Activated CD4-positive, alpha-beta T cell treated with anti-CD3 and anti-CD28 coated beads, Interleukin-2, amount 10 ng/mL, durations not matched to agents 24 days and 14 days (primary cell): ENCODE measurements at regions of chr4 and their contacts with region 1.

Region 1: DNA sequence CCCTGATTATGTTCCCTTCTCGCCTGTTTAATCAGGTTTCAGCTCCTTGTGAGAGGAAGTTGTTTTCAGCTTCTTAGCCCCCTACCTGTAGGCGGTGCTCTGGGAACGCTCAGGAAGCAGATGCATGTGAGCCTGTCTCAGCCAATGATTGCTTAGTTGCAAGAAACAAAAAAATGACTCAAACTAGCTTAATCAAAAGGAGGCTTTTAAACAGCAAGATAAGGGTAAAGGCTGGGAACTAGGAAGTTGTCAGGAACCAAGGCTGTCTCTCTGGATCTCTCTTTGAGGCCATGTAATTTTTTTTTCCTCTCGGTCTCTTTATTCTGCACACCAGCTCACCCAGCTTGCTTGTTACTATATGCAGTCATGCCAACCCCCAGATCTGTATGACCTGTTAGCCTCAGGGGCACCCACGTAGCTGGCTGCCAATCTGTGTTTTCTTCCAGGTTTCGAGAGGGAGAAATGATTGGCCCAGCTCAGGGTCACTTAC is 109.1 kb downstream of the PTTG2 start:
- DNase-seq: peak; percentile 82
- H3K4me3 Mint-ChIP-seq: no peak overlapping the region
- H3K27ac Mint-ChIP-seq: no peak overlapping the region
- H3K4me1 Mint-ChIP-seq: peaks cover 16% of the 10 kb centered on the region
- H3K27me3 Mint-ChIP-seq: no peaks in the 10 kb centered on the region

Region 2: GRCh38 chr4:38091636-38092035 is 22.3 kb after region 1 on chr4:
- intact Hi-C with region 1: loop called (anchors 2 kb)
- DNase-seq: no peak
- H3K4me3 Mint-ChIP-seq: no peak overlapping the region
- H3K27ac Mint-ChIP-seq: no peak overlapping the region
- H3K4me1 Mint-ChIP-seq: peaks cover 17% of the 10 kb centered on the region
- H3K27me3 Mint-ChIP-seq: no peaks in the 10 kb centered on the region

Region 3: DNA sequence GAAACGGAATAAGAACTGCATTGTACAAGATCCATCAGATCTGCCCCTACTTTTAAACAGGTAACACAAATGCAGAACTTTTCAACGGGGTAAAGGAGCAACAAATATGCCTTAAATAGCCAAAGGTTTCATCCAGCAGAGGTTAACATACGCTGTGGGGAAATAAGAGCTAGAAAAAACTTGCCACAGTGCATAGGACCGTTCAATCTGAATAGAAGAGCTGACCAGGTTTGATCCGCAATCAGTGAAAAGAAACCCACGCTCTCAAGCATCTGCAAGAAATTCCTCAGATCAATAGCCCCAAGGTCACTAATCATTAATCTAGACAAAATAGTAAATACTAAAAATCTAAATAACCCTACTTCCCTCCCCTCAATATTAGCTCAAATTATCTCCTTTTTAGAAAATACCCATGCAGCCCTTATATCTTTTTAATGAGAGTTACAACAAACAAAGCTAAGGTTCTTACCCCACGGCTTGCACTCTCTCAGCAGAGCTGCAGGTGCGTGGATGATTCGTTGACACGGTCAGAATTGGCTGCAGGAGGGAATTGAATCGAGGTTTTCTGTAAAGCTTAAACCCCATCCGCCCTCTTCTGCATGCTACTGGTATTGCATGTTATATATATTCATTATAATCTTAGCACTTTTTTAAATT is 713.3 kb after region 1 on chr4 and contains the start of gene TLR10:
- intact Hi-C with region 1: loop called (anchors 5 kb)
- DNase-seq: peak; percentile 81
- H3K4me3 Mint-ChIP-seq: peak within 1 kb of the TSS; percentile 31
- H3K27ac Mint-ChIP-seq: no peak within 1 kb of the TSS
- H3K4me1 Mint-ChIP-seq: peaks cover 8% of the 10 kb centered on the region
- H3K27me3 Mint-ChIP-seq: peaks cover 4% of the 10 kb centered on the region
- total RNA-seq, gene TLR10: not detected in 2 replicates